ENCODE measurements at regions of chr1 and their contacts with region 1.

Region 1: GRCh38 chr1:109984456-109985275 is at the start of gene AHCYL1:
- DNase-seq: peak; percentile 99
- H3K4me3 ChIP-seq: peak within 1 kb of the TSS; percentile 91 to 94
- H3K27ac ChIP-seq: peak within 1 kb of the TSS; percentile 89
- H3K4me1 ChIP-seq: peaks cover 19 to 25% of the 10 kb centered on the region in 2 experiments; a peak in 3 of 4 replicates
- H3K27me3 ChIP-seq: no peaks in the 10 kb centered on the region
- CTCF ChIP-seq: peak; percentile 96
- EP300 ChIP-seq: no peak
- RAD21 ChIP-seq: peak; percentile 99
- polyA plus RNA-seq, gene AHCYL1: 39.7 and 49.0 TPM in 2 replicates

Region 2: DNA sequence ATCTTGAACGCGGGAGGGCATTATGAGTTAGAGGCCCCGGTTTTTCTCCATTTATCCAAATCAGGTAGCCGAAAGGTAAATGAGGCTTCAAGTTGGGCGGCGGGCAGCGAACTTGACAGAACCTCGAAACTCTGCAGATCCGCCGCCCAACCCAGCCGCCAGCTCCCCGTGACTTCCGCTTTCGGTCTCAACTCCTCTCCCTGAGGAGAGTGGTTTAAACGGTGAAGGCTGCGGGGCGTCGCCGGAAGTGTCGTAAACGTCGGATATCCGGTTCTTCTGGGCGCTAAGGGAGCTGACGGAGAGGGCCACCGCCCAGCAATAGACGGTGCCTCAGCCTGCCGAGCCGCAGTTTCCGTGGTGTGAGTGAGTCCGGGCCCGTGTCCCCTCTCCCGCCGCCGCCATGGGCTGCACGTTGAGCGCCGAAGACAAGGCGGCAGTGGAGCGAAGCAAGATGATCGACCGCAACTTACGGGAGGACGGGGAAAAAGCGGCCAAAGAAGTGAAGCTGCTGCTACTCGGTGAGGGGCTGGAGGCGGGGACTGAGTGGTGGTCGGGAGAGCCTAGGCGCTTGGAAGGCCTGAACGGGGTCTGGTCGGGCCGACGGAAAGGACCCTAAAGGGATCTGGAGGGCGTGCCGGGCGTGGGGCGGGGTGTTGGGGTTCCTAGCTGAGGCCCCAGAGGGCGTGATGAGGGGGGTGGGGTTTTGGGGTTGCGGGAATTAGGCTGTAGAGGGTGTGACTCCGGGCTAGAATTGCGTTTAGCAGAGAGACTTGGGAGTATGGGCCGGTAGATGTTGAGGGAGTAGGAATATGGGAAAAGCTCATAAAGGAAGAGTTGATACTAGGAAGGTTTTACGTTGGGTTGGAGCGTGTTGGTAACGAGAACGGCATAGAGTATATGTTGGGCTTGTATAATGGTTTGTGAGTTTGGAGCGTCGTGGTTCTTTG is 436.1 kb before region 1 on chr1 and contains the start of gene GNAI3:
- CTCF ChIA-PET with region 1: interaction called, 53 read pairs
- POLR2A ChIA-PET with region 1: interaction called, 3 read pairs
- DNase-seq: peak; percentile 90
- H3K4me3 ChIP-seq: peak within 1 kb of the TSS; percentile 80 to 88
- H3K27ac ChIP-seq: peak within 1 kb of the TSS; percentile 88 to 93
- H3K4me1 ChIP-seq: peaks cover 3 to 20% of the 10 kb centered on the region in 2 experiments; a peak in 3 of 4 replicates
- H3K27me3 ChIP-seq: no peaks in the 10 kb centered on the region
- CTCF ChIP-seq: no peak
- EP300 ChIP-seq: peak in 1 of 2 experiments; percentile 33; a peak in 1 of 4 replicates
- RAD21 ChIP-seq: no peak; the same call in 1 of the 2 replicates
- polyA plus RNA-seq, gene GNAI3: 4.0 and 4.8 TPM in 2 replicates

Region 3: GRCh38 chr1:109655601-109656519 is 328.8 kb before region 1 on chr1 and contains the start of gene GSTM4:
- CTCF ChIA-PET with region 1: interaction called, 16 read pairs
- POLR2A ChIA-PET with region 1: no interaction called
- DNase-seq: peak; percentile 89
- H3K4me3 ChIP-seq: peak within 1 kb of the TSS; percentile 69 to 72
- H3K27ac ChIP-seq: peak within 1 kb of the TSS; percentile 41 to 83; a peak in 3 of 4 replicates
- H3K4me1 ChIP-seq: peaks cover 12% of the 10 kb centered on the region in 2 experiments; a peak in 3 of 4 replicates
- H3K27me3 ChIP-seq: no peaks in the 10 kb centered on the region
- CTCF ChIP-seq: peak; percentile 20; the same call in 1 of the 2 replicates
- EP300 ChIP-seq: no peak
- RAD21 ChIP-seq: no peak
- polyA plus RNA-seq, gene GSTM4: 34.2 and 36.1 TPM in 2 replicates

Region 4: DNA sequence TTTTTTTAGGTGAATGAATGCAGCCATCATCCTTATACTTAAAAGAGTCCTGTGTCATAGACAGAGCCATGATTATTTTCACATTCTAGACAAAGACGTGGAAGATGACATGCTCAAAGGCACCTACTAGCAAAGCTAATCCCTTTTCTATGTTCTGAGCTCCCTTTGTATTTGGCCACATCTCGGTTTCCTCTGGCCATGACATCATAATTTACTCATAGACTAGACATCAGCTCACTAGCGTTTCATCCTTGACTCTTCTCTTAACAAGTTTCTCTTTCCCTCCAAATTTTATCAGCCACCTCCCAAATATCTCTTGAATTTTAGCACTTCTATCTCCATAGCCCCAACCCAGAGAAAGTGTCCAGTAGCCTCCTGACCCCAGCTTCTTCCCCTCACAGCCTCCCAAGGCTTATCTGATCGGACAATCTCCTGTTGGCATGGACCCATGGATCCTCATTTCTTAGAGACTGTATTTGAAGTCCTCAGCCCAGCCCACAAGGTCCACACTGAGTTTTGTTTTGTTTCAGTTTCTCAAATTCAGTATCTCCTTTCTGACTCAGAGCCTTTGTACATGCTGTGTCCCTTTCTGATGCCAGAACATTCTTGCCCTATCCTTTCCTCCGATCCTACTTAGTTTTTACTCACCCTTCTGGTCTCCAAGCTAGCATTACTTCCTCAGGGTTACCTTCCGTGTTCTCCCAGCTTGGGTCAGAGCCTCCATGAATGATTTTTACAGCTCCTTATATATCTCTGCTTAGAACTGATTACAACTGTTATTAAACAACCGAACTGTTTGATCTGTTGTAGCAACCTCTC is 188.0 kb before region 1 on chr1:
- CTCF ChIA-PET with region 1: interaction called, 822 read pairs
- POLR2A ChIA-PET with region 1: no interaction called
- DNase-seq: no peak
- H3K4me3 ChIP-seq: no peak overlapping the region
- H3K27ac ChIP-seq: peak overlapping the region in 1 of 2 experiments; percentile 44; a peak in 2 of 4 replicates
- H3K4me1 ChIP-seq: peaks cover 36 to 38% of the 10 kb centered on the region in 2 experiments
- H3K27me3 ChIP-seq: no peaks in the 10 kb centered on the region
- CTCF ChIP-seq: no peak
- EP300 ChIP-seq: no peak
- RAD21 ChIP-seq: no peak

Region 5: DNA sequence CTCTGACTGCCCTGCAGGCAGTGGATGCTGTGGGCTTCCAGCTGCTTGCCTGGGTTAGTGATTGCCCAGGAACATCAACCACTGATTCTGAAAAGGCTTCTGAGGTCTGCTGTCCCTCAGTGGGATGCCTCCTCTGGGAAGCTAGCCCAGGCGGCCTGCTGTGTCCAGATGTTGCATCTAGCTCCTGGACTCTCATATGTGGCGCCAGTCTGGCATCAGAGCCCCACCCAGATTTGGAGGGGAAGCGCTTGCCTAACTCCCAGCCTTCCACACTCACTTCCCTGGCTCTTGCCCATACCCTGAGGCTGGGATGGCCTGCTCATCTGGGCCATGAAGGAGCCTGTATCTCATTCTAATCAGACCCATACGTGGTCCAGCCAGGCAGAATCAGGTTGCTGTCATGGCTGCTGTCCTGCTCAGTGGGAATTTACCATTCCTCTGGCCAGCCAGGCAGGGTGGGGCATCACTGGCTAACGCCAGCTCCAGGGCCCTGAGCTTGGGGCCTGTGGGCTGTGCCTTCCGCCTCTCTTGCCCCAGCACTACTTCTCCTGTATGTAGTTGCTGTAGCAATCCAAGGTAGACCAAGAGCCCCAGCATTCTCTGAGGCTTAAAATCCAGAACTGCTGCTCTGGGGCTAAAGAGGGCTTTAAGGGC is 70.0 kb before region 1 on chr1:
- CTCF ChIA-PET with region 1: interaction called, 18 read pairs
- POLR2A ChIA-PET with region 1: no interaction called
- DNase-seq: peak; percentile 77
- H3K4me3 ChIP-seq: no peak overlapping the region
- H3K27ac ChIP-seq: no peak overlapping the region
- H3K4me1 ChIP-seq: peaks cover 8 to 37% of the 10 kb centered on the region in 2 experiments; a peak in 2 of 4 replicates
- H3K27me3 ChIP-seq: no peaks in the 10 kb centered on the region
- CTCF ChIP-seq: no peak
- EP300 ChIP-seq: peak in 1 of 2 experiments; percentile 56; a peak in 1 of 4 replicates
- RAD21 ChIP-seq: 0 out of 2 replicates have a peak, but pooled peaks have one; percentile 8

Region 6: GRCh38 chr1:109947582-109948286 is 36.9 kb before region 1 on chr1:
- CTCF ChIA-PET with region 1: interaction called, 23 read pairs
- POLR2A ChIA-PET with region 1: no interaction called
- DNase-seq: no peak
- H3K4me3 ChIP-seq: no peak overlapping the region
- H3K27ac ChIP-seq: no peak overlapping the region
- H3K4me1 ChIP-seq: no peaks in the 10 kb centered on the region
- H3K27me3 ChIP-seq: no peaks in the 10 kb centered on the region
- CTCF ChIP-seq: no peak
- EP300 ChIP-seq: no peak
- RAD21 ChIP-seq: no peak

Region 7: DNA sequence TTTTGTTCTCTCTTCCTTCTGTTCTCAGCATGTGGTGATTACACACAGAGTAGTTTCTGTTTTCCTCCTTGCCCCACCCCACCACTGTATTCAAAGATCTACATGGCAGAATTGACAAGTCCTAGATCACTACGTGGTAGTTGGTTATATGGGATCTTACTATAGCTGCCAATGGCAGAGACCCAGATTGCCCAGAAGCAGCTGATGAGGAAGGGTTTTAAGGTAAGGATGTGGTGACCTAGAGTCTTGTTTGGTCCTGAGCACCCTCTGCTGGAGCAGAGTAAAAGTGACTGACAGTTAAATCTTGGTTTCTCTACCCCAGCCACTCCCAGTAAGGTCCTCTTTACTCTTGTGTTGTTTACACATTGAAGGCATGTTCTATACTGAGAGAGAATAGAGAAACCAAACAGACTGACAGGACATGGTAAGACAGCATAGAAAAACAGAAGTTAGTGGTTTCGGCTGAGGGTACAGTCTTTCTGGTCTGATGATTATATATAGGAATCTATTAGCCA is 26.9 kb after region 1 on chr1:
- CTCF ChIA-PET with region 1: interaction called, 63 read pairs
- POLR2A ChIA-PET with region 1: interaction called, 7 read pairs
- DNase-seq: peak; percentile 47
- H3K4me3 ChIP-seq: no peak overlapping the region
- H3K27ac ChIP-seq: peak overlapping the region in 1 of 2 experiments; percentile 92; a peak in 2 of 4 replicates
- H3K4me1 ChIP-seq: peaks cover 0 to 26% of the 10 kb centered on the region in 2 experiments; a peak in 2 of 4 replicates
- H3K27me3 ChIP-seq: no peaks in the 10 kb centered on the region
- CTCF ChIP-seq: peak; percentile 69
- EP300 ChIP-seq: no peak
- RAD21 ChIP-seq: peak; percentile 73